CD4-positive, alpha-beta T cell (primary cell): ENCODE measurements at regions of chr11 and their contacts with region 1.

Region 1: GRCh38 chr11:121356357-121356756 is 63.8 kb downstream of the SC5D start:
- DNase-seq: no peak
- ATAC-seq: no peak
- H3K4me3 ChIP-seq: no peak overlapping the region
- H3K4me3 Mint-ChIP-seq: no peak overlapping the region
- H3K27ac ChIP-seq: no peak overlapping the region
- H3K27ac Mint-ChIP-seq: no peak overlapping the region
- H3K4me1 ChIP-seq: no peaks in the 10 kb centered on the region
- H3K4me1 Mint-ChIP-seq: peaks cover 4% of the 10 kb centered on the region
- H3K27me3 ChIP-seq: no peaks in the 10 kb centered on the region
- H3K27me3 Mint-ChIP-seq: no peaks in the 10 kb centered on the region
- CTCF ChIP-seq: no peak

Region 2: DNA sequence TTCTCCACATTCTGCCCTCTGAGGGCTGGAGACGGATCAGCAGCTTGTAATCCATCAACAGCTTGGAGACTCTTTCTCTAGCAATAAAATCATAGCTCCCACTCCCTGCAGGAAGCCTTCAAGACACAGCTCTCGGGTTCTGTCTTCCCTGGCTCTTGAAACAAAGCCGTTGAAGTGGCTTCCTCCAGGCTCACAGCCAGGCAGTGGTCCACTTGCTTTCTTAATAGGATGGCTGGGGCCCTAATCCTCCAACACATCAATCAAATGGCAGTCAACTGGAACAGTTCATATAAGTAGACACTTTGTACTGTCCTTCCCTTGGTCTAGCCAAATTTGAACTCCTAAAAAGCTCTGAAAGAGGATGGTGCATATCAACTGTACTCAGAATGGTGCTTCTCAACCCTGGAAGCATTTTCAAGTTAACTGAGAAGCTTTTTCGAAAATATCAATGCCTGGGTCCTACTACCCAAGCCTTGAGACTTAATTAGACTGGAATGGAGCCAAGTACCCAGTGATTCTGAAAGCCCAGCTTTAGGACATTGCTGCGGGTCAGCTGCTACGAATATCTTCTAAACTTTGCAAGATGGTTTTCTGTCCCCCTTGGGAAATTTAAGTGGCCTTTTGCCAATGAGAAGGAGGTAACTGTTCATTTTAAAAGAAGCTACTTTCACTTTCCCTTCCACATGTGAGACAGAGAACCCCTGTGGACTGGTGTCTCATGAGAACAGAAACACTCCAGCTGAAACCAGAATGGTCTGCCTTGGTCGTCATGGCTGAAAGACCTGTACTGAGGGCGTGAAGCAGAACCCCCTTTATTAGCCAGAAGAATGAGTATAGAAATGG is 10.9 kb after region 1 on chr11:
- CTCF ChIA-PET with region 1: no interaction called
- POLR2A ChIA-PET with region 1: interaction called, 10 read pairs
- intact Hi-C with region 1: no loop called
- DNase-seq: peak in 11 of 14 experiments; percentile 11 to 82 (median 25)
- ATAC-seq: peak; percentile 88
- H3K4me3 ChIP-seq: peak overlapping the region; percentile 17
- H3K4me3 Mint-ChIP-seq: peak overlapping the region; percentile 84
- H3K27ac ChIP-seq: peak overlapping the region; percentile 4 to 31
- H3K27ac Mint-ChIP-seq: peak overlapping the region; percentile 81
- H3K4me1 ChIP-seq: peaks cover 23% of the 10 kb centered on the region
- H3K4me1 Mint-ChIP-seq: peaks cover 45% of the 10 kb centered on the region
- H3K27me3 ChIP-seq: no peaks in the 10 kb centered on the region
- H3K27me3 Mint-ChIP-seq: no peaks in the 10 kb centered on the region
- CTCF ChIP-seq: no peak

Region 3: DNA sequence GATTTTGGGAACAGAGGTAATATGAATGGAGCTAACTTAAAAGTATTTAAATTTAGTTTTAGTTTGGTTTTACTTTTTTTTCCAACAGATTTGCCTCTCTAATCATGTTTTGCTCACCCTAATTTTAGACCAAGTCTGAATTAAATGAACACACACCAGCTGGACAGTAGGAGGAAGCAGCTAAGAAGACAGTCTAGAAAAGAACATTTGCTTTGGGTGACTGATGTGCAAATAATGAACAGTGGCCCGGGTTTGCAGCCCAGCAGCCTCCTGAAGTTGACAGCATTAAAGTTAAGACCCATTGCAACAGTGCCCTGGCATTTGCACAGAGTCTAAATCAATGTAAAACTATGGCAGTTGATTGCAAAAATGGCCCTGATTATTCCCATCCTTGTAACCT is 29.3 kb after region 1 on chr11:
- CTCF ChIA-PET with region 1: no interaction called
- POLR2A ChIA-PET with region 1: no interaction called
- intact Hi-C with region 1: no loop called
- DNase-seq: no peak
- ATAC-seq: no peak
- H3K4me3 ChIP-seq: no peak overlapping the region
- H3K4me3 Mint-ChIP-seq: no peak overlapping the region
- H3K27ac ChIP-seq: no peak overlapping the region
- H3K27ac Mint-ChIP-seq: no peak overlapping the region
- H3K4me1 ChIP-seq: no peaks in the 10 kb centered on the region
- H3K4me1 Mint-ChIP-seq: peaks cover 12% of the 10 kb centered on the region
- H3K27me3 ChIP-seq: no peaks in the 10 kb centered on the region
- H3K27me3 Mint-ChIP-seq: no peaks in the 10 kb centered on the region
- CTCF ChIP-seq: no peak